ENCODE measurements at regions of chr2 and their contacts with region 1.

Region 1: DNA sequence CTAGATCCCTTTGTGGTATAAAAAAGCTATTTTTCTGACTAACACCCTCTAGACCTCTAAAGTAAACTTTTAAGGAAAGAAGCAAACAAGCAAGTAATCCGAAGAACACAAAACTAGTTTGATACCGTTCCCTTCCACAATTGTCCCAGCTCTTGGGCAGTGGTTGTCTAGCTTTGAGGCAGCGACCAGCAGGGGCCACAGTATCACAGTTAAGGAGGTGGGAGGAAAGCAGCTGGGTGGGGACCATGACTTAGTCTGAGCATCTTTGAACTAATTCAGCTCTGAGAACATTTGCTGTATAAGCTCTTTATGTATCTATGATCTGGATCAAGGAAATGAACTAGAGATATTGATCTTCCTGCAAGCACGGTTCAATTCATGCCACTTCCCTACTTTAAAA is 51.0 kb downstream of the SF3B1 start:
- DNase-seq: no peak
- H3K4me3 ChIP-seq: no peak overlapping the region
- H3K27ac ChIP-seq: no peak overlapping the region
- H3K4me1 ChIP-seq: no peaks in the 10 kb centered on the region
- H3K27me3 ChIP-seq: no peaks in the 10 kb centered on the region
- CTCF ChIP-seq: no peak
- EP300 ChIP-seq: no peak
- POLR2A ChIP-seq: no peak

Region 2: DNA sequence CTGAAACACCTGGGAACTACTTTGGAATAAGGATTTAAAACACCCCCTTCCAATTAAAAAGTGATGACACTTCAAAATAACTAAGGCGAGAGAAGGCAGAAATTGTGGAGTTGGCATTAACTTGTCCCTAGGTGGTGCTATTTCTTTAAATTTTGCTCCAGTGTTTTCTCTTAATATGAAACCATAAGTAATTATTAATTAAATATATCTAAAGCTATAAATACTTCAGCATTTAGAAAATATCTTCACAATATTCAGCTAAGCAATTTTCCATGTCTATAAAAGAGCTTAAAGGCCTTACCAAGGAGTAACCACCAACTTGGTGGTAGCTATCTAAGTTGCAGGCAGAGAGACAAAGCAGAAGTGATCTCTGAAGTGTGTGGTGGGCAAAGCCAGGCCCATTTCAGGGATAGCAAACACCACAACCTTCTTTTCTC is 270.5 kb before region 1 on chr2:
- intact Hi-C with region 1: loop called in 2 of 4 experiments (anchors 5 kb)
- DNase-seq: no peak
- H3K4me3 ChIP-seq: no peak overlapping the region
- H3K27ac ChIP-seq: no peak overlapping the region
- H3K4me1 ChIP-seq: no peaks in the 10 kb centered on the region
- H3K27me3 ChIP-seq: no peaks in the 10 kb centered on the region
- CTCF ChIP-seq: peak; percentile 33 to 47 (median 35)
- EP300 ChIP-seq: no peak
- POLR2A ChIP-seq: no peak

Region 3: DNA sequence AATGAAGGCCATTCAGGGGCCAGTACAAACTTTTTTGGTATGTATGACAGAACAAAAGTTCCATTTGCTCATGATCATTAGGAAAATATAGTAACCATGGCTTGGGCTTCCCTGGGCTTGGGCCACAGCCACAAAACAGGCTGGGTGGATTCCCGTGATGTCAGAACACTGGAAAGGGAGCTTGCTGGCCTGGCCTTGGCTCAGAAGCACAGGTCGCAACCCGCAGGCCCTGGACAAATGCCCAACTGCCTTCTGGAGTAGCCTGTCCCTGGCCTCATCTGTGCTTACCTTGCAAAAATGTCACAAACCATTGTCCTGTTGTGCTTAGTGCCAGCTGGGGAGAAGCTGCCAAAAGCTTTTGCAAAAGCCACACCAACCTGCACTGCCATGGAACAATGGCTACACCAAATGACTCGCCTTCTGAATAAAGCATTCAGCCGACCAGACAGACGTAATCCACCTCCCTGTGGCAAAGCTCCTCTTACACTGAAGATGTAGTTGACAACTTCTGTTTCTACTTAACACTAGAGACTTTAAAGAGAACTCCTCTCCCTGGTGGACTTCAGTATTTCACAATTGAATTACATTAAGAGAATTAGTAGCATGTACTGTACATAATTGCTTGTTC is 198.8 kb before region 1 on chr2:
- intact Hi-C with region 1: loop called in 1 of 4 experiments (anchors 10 kb)
- DNase-seq: peak; percentile 47 to 79 (median 59)
- H3K4me3 ChIP-seq: no peak overlapping the region
- H3K27ac ChIP-seq: no peak overlapping the region
- H3K4me1 ChIP-seq: no peaks in the 10 kb centered on the region
- H3K27me3 ChIP-seq: no peaks in the 10 kb centered on the region
- CTCF ChIP-seq: no peak
- EP300 ChIP-seq: no peak
- POLR2A ChIP-seq: no peak

Region 4: GRCh38 chr2:197198890-197199289 is 184.9 kb before region 1 on chr2:
- intact Hi-C with region 1: loop called in 1 of 4 experiments (anchors 5 kb)
- DNase-seq: peak; percentile 26 to 61 (median 43)
- H3K4me3 ChIP-seq: no peak overlapping the region
- H3K27ac ChIP-seq: no peak overlapping the region
- H3K4me1 ChIP-seq: no peaks in the 10 kb centered on the region
- H3K27me3 ChIP-seq: no peaks in the 10 kb centered on the region
- CTCF ChIP-seq: no peak
- EP300 ChIP-seq: no peak
- POLR2A ChIP-seq: no peak

Region 5: DNA sequence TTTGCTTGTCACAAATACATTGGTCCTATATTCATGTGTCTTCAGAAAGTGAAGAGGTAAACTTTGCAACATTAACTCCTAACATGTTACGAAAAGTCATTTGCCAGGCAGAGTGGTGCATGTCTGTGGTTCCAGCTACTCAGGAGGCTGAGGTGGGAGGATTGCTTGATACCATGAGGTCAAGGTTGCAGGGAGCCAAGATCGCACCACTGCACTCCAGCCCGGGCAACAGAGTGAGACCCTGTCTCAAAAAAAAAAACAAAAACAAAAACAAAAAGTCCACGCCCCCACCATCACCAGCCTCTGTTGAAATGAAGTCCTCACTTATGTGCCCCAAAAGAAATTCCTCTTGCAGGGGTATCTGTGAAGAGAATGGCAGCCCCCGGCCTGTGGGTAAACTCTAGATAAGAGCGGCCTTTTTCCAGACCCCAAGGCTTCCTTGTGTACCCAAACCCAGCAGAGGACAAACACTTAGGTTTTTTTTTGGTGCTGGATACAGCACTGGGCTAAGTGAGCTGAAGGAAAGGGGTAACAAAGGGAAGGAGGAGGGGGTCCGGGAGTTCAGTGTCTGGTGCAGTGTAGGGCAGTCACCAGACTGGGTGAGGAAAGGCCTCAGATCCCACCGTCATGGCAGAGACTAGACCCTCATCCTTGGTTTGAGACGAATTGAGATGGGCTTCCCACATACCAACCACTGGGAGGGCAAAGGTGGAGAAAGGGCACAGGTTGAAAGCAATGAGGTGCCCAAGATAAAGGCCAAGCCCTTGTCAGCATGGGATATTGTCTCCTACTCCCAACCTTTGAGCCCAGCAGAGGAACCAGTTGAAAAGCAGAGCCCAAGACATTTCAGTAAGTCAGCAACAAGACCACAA is 96.6 kb after region 1 on chr2:
- intact Hi-C with region 1: no loop called
- DNase-seq: no peak
- H3K4me3 ChIP-seq: no peak overlapping the region
- H3K27ac ChIP-seq: no peak overlapping the region
- H3K4me1 ChIP-seq: no peaks in the 10 kb centered on the region
- H3K27me3 ChIP-seq: no peaks in the 10 kb centered on the region
- CTCF ChIP-seq: no peak
- EP300 ChIP-seq: no peak
- POLR2A ChIP-seq: no peak

Region 6: DNA sequence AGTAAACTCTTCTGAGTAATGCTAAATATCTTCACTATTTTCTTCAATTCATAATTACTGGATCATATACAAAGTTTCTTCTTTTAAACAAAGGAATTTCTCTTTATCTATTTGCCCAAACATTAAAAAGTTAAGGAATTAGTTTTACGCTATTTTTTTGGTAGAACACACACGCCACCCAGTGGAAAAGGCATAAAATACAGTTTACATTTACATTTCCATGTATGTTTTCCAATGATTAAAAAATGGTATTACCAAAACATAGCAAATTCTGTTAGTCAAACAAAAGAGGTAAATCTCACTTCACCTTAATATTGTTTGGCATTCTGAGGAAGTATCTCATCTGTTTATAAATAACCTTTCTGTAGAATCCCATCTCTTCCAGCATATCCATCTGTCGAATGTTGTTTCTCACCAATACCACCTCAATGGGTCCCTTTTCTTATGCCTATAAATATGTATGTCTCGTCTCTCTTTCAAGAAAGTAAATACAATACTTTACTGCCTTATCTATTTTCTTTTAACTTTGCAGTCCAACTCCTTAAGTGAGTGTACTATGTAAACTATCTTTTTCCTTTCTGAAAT is 394.1 kb after region 1 on chr2:
- intact Hi-C with region 1: loop called in 1 of 4 experiments (anchors 10 kb)
- DNase-seq: no peak
- H3K4me3 ChIP-seq: no peak overlapping the region
- H3K27ac ChIP-seq: no peak overlapping the region
- H3K4me1 ChIP-seq: no peaks in the 10 kb centered on the region
- H3K27me3 ChIP-seq: no peaks in the 10 kb centered on the region
- CTCF ChIP-seq: peak in 2 of 3 donors; percentile 55 to 58
- EP300 ChIP-seq: no peak
- POLR2A ChIP-seq: no peak